CD4-positive, alpha-beta memory T cell (primary cell): ENCODE measurements at regions of chr5 and their contacts with region 1.

Region 1: DNA sequence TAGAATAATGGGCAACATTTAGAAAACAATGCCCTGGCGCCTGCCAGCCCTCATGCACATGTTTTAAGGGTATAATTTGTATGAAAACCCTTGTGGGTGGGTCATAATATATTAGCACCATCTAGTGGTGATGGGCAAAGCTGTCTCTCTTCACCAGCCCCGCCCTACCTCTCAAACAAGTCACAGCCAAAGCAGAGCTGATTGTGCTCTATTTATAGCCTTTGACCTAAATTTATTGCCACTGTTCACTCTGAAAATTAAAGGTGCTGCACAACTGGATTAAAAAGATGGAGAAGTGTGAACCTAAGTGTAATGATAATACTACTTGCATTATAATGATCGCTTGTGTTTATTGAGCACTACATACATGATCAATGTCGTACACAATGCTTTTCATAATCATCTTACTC is 131.9 kb upstream of the ANKH start:
- DNase-seq: peak; percentile 68 to 73 (median 70)
- H3K4me3 ChIP-seq: no peak overlapping the region
- H3K4me3 Mint-ChIP-seq: no peak overlapping the region
- H3K27ac ChIP-seq: no peak overlapping the region
- H3K27ac Mint-ChIP-seq: no peak overlapping the region
- H3K4me1 ChIP-seq: no peaks in the 10 kb centered on the region
- H3K4me1 Mint-ChIP-seq: peaks cover 0 to 3% (median 1%) of the 10 kb centered on the region in 4 donors
- H3K27me3 ChIP-seq: no peaks in the 10 kb centered on the region
- H3K27me3 Mint-ChIP-seq: peaks cover 2 to 4% of the 10 kb centered on the region in 2 donors

Region 2: DNA sequence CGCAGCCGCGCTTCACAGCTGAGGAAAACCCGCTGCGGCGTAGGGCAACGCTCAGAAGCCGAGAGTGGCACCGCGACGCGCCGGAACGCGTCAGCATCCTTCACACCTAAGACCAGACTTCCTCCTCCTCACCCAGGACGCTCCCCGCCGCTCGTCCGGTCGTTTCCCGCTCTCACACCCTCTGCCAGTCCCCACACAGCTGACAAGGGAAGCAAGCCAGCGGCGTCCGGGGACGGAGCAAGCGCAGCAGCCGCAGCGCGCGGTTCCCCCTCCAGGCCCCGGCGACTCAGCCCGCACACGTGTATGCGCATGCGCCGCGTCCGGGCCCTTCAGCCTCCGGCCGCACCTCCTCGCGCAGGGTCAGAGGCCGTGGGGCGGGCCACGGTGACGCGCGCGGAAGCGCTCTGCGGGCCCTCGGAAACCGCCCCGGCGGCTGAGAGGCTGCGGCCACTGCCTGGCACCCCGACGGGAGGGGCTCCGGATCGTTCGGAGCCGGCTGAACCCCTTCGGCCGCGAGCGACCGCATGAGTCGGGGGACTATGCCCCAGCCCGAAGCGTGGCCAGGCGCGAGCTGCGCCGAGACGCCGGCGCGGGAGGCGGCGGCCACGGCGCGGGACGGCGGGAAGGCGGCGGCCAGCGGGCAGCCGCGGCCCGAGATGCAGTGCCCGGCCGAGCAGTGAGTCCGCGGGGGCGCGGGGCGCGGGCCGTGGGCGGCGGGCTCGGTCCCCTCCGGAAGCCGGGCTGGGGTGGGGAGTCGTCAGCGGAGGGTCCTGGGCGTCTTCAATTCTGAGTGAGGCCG is 339.0 kb before region 1 on chr5 and contains the start of gene OTULIN:
- CTCF ChIA-PET with region 1: interaction called, 3 read pairs
- POLR2A ChIA-PET with region 1: no interaction called
- intact Hi-C with region 1: loop called (anchors 5 kb)
- DNase-seq: peak; percentile 82 to 92 (median 84)
- H3K4me3 ChIP-seq: peak within 1 kb of the TSS; percentile 54 to 80
- H3K4me3 Mint-ChIP-seq: peak within 1 kb of the TSS; percentile 94 to 98 (median 96)
- H3K27ac ChIP-seq: peak within 1 kb of the TSS; percentile 81
- H3K27ac Mint-ChIP-seq: peak within 1 kb of the TSS; percentile 89 to 99 (median 96)
- H3K4me1 ChIP-seq: peaks cover 61% of the 10 kb centered on the region
- H3K4me1 Mint-ChIP-seq: peaks cover 44 to 76% (median 56%) of the 10 kb centered on the region in 4 donors
- H3K27me3 ChIP-seq: no peaks in the 10 kb centered on the region
- H3K27me3 Mint-ChIP-seq: no peaks in the 10 kb centered on the region
- total RNA-seq, gene OTULIN: 59.4 to 69.0 TPM

Region 3: DNA sequence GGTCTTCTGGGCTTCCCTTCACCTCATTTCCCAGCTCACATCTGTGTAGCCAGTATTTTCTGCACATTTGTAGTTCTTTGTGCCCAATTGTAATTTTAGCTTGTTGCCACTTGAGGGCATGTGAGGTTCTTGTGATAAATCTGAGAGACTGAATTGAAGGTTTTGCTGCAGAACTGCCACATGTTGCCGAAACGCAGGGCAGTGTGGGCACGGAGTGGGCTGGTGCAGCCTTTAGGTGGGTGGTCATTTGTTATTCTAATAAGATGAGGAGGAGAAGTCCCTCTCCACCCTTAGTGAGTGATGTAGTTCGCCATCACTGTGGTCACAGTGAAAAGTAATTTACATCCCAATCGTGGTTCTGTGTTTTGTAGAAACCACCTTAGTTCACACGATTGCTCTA is 317.8 kb before region 1 on chr5:
- CTCF ChIA-PET with region 1: interaction called, 104 read pairs
- POLR2A ChIA-PET with region 1: interaction called, 4 read pairs
- intact Hi-C with region 1: loop called (anchors 1 kb)
- DNase-seq: peak; percentile 52 to 63 (median 57)
- H3K4me3 ChIP-seq: no peak overlapping the region
- H3K4me3 Mint-ChIP-seq: peak overlapping the region; percentile 38 to 86 (median 67)
- H3K27ac ChIP-seq: no peak overlapping the region
- H3K27ac Mint-ChIP-seq: peak overlapping the region in 6 of 7 donors; percentile 8 to 97 (median 64)
- H3K4me1 ChIP-seq: peaks cover 7% of the 10 kb centered on the region
- H3K4me1 Mint-ChIP-seq: peaks cover 7 to 12% (median 11%) of the 10 kb centered on the region in 4 donors
- H3K27me3 ChIP-seq: no peaks in the 10 kb centered on the region
- H3K27me3 Mint-ChIP-seq: no peaks in the 10 kb centered on the region

Region 4: DNA sequence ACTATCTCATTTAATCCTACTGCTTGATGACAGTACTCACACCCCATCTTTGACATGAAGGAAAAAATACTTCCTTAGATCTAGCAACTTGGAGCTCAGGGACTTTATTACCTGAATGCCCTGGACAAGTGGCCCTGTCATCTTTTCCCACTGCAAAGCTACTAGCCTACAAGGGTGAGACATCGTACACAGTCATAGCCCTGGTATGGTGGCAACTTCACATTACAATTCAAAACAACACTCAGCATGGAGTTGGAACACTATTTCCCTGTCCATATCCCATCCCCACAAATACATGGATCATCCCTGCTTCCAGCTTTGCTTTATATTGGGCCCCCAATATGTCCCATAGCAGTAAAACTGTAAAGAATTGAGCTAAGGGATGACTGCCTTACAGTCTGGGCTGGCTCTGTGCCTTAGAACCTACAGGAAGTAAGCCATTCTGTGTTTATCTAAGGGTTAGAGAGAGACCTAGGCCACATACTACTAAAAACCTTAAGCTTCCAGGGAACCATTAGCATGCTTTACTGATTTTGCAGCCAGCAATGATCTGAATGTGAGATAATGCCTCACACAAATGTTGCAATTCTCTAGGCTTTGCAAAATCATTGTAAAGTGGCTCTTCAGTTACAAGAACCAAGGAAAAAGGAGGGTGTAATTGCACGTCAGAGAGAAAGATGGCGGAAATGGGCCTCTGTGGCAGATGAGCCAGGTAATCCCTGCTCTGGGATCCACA is 283.1 kb before region 1 on chr5:
- CTCF ChIA-PET with region 1: interaction called, 134 read pairs
- POLR2A ChIA-PET with region 1: no interaction called
- intact Hi-C with region 1: no loop called
- DNase-seq: no peak
- H3K4me3 ChIP-seq: no peak overlapping the region
- H3K4me3 Mint-ChIP-seq: no peak overlapping the region
- H3K27ac ChIP-seq: no peak overlapping the region
- H3K27ac Mint-ChIP-seq: peak overlapping the region; percentile 41 to 84 (median 68)
- H3K4me1 ChIP-seq: peaks cover 14% of the 10 kb centered on the region
- H3K4me1 Mint-ChIP-seq: peaks cover 15 to 37% (median 22%) of the 10 kb centered on the region in 4 donors
- H3K27me3 ChIP-seq: no peaks in the 10 kb centered on the region
- H3K27me3 Mint-ChIP-seq: no peaks in the 10 kb centered on the region

Region 5: DNA sequence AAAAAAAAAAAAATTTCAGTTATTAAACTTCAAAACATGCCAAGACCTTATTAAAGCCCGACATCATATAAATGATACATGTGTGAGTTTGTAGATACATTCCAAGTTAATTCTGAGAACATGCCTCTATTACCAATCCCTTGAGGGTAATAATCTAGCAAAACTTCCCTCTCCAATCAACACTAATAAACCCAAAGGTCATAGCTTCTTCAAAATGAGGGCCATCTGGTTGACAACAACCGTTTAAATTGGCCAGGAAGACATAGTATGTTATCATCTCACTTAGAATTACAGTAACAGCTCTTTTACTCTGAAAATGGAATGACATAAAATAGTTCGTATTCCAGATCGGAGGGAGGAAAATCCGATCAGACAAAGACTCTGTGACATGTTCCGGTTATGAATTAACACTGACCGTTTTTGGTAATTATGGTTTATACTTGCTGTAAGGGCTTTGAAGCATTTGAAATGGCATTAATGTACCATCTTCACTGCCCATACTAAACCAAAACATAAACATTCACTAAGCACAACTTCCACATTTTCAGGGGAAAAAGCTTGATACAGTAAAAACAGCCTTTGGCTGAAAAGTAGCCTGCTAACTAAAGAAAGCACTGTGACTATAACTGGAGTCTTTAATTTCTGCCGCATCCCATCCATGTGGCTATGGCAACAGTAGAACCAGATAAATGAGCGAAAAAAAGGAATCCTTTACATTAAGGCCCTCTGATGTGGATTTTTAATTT is 182.2 kb before region 1 on chr5:
- CTCF ChIA-PET with region 1: no interaction called
- POLR2A ChIA-PET with region 1: no interaction called
- intact Hi-C with region 1: no loop called
- DNase-seq: no peak
- H3K4me3 ChIP-seq: no peak overlapping the region
- H3K4me3 Mint-ChIP-seq: no peak overlapping the region
- H3K27ac ChIP-seq: no peak overlapping the region
- H3K27ac Mint-ChIP-seq: no peak overlapping the region
- H3K4me1 ChIP-seq: no peaks in the 10 kb centered on the region
- H3K4me1 Mint-ChIP-seq: peaks cover 34 to 62% (median 48%) of the 10 kb centered on the region in 4 donors
- H3K27me3 ChIP-seq: no peaks in the 10 kb centered on the region
- H3K27me3 Mint-ChIP-seq: no peaks in the 10 kb centered on the region

Region 6: GRCh38 chr5:14958196-14958595 is 45.3 kb before region 1 on chr5:
- CTCF ChIA-PET with region 1: interaction called, 76 read pairs
- POLR2A ChIA-PET with region 1: no interaction called
- intact Hi-C with region 1: loop called (anchors 1 kb)
- DNase-seq: no peak
- H3K4me3 ChIP-seq: no peak overlapping the region
- H3K4me3 Mint-ChIP-seq: no peak overlapping the region
- H3K27ac ChIP-seq: no peak overlapping the region
- H3K27ac Mint-ChIP-seq: no peak overlapping the region
- H3K4me1 ChIP-seq: no peaks in the 10 kb centered on the region
- H3K4me1 Mint-ChIP-seq: peaks cover 0 to 2% (median 0%) of the 10 kb centered on the region in 4 donors
- H3K27me3 ChIP-seq: no peaks in the 10 kb centered on the region
- H3K27me3 Mint-ChIP-seq: no peaks in the 10 kb centered on the region